ENCODE measurements at regions of chr15 and their contacts with region 1.

Region 1: GRCh38 chr15:99909592-99910295 is 176.5 kb upstream of the LYSMD4 start:
- DNase-seq: no peak
- ATAC-seq: peak in 7 of 8 donors; percentile 72 to 85 (median 79)
- H3K4me3 ChIP-seq: no peak overlapping the region
- H3K27ac ChIP-seq: no peak overlapping the region
- H3K4me1 ChIP-seq: peaks cover 0 to 7% (median 0%) of the 10 kb centered on the region in 9 donors
- H3K27me3 ChIP-seq: no peaks in the 10 kb centered on the region
- CTCF ChIP-seq: peak in 7 of 9 donors; percentile 32 to 60 (median 44)

Region 2: GRCh38 chr15:98525661-98526001 is 1384.1 kb before region 1 on chr15:
- intact Hi-C with region 1: loop called in 1 of 10 experiments (anchors 10 kb)
- DNase-seq: no peak
- ATAC-seq: peak in 1 of 8 donors; percentile 41
- H3K4me3 ChIP-seq: no peak overlapping the region
- H3K27ac ChIP-seq: peak overlapping the region in 1 of 10 donors; percentile 15
- H3K4me1 ChIP-seq: no peaks in the 10 kb centered on the region
- H3K27me3 ChIP-seq: peaks cover 0 to 24% (median 10%) of the 10 kb centered on the region in 7 donors
- CTCF ChIP-seq: no peak

Region 3: DNA sequence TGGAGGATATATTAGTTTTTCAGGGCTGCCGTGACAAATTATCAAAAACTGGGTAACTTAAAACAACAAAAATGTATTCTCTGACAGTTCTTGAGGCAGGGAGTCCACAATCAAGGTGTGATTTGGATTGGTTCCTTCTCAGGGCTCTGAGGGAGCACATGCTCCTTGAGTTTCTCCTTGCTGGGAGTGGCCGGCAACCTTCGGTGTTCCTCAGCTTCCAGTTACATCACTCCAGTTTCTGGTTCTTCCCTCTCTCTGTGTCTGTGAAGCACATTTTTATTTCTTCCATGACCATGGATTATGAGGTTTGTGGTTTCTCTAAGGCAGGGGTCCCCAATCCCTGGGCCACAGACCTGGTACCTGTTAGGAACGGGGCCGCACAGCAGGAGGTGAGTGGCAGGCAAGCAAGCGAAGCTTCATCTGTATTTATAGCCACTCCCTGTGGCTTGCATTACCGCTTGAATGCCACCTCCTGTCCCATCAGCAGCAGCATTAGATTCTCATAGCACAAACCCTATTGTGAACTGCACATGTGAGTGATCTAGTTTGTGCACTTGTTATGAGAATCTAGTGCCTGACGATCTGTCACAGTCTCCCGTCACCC is 634.1 kb before region 1 on chr15:
- intact Hi-C with region 1: loop called in 2 of 10 experiments (anchors 5 to 10 kb)
- DNase-seq: no peak
- ATAC-seq: peak in 1 of 8 donors; percentile 35
- H3K4me3 ChIP-seq: no peak overlapping the region
- H3K27ac ChIP-seq: no peak overlapping the region
- H3K4me1 ChIP-seq: peaks cover 0 to 13% (median 0%) of the 10 kb centered on the region in 9 donors
- H3K27me3 ChIP-seq: no peaks in the 10 kb centered on the region
- CTCF ChIP-seq: no peak

Measured in heart right ventricle (tissue), 16 donors.